ENCODE measurements at regions of chr4 and their contacts with region 1.

Region 1: DNA sequence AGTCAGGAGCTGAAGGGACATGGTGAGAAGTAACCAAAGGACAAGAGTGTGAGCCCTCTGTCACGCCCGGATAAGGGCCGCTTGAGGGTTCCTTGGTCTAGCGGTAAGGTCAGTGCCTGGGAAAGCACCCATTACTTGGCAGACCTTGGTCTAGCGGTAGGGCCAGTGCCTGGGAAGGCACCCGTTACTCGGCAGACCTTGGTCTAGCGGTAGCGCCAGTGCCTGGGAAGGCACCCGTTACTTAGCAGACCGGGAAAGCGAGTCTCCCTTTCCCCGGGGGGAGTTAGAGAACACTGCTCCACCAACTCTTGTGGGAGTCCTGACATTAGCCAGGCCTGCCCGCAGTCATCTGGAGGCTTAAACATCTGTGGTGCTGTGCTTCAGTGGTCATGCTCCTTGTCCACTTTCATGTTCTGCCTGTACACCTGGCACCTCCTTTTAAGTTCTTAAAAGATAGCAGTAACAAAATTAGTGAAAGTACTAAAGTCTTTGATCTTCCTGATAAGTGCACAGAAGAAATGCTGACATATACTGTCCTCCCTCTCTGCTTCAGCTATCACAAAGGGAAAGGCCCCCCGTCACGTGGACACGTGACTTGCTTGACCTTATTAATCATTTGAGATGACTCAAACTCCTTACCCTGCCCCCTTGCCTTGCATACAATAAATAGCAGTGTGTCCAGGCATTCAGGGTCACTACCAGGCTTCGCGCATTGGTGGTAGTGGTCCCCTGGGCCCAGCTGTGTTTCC is 9.3 kb upstream of the SEC24B start:
- DNase-seq: no peak
- ATAC-seq: no peak
- H3K4me3 ChIP-seq: no peak overlapping the region
- H3K27ac ChIP-seq: no peak overlapping the region
- H3K4me1 ChIP-seq: peaks cover 0 to 5% (median 0%) of the 10 kb centered on the region in 12 donors
- H3K27me3 ChIP-seq: no peaks in the 10 kb centered on the region
- CTCF ChIP-seq: no peak
- POLR2A ChIP-seq: no peak

Region 2: DNA sequence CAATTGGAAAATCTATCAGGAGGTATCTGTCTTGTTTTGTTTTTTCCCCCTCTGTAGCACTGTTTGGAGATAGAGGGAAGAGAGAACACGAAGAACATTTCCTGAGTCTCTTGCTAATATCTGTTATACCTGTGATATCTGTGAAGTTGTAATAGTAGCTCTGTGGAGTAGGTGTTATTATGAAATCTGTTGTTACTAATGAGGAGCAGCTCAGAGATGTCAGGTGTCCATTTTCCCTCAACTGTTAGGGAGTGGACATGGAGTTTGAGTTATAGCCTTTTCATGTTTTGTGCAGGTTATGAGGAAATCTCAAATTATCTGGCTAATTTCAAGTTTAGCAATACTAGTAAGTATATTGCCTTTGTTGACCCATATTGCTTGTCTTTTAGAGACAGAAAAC is 61.7 kb after region 1 on chr4:
- intact Hi-C with region 1: no loop called
- DNase-seq: no peak
- ATAC-seq: no peak
- H3K4me3 ChIP-seq: no peak overlapping the region
- H3K27ac ChIP-seq: no peak overlapping the region
- H3K4me1 ChIP-seq: peaks cover 0 to 4% (median 0%) of the 10 kb centered on the region in 12 donors
- H3K27me3 ChIP-seq: no peaks in the 10 kb centered on the region
- CTCF ChIP-seq: no peak
- POLR2A ChIP-seq: no peak

Region 3: DNA sequence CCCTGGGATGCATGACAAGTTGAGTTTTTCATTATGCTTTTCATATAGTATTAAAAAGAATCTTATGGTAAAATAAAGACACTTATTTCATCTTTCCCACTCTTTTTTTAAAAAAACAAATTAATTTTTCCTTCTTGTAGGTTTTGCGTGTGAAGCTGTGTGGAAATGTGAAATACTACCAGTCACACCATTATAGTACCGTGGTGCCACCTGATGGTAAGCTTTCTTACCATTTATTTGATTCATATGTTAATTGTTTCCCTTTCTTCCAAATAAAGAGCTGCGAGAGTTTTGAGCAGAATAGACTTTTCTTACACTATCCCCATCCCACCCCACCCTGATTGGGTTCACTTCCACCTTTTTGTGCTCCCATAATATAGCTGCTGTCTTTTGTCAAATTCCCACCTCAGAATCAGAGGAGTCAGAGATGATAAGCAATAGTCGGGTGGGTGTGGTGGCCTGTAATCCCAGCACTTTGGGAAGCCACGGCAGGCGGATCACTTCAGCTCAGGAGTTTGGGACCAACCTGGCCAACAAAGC is 234.7 kb after region 1 on chr4:
- intact Hi-C with region 1: loop called in 9 of 10 experiments (anchors 2 to 10 kb)
- DNase-seq: no peak
- ATAC-seq: no peak
- H3K4me3 ChIP-seq: no peak overlapping the region
- H3K27ac ChIP-seq: no peak overlapping the region
- H3K4me1 ChIP-seq: no peaks in the 10 kb centered on the region
- H3K27me3 ChIP-seq: no peaks in the 10 kb centered on the region
- CTCF ChIP-seq: peak in 6 of 12 donors; percentile 13 to 41 (median 29)
- POLR2A ChIP-seq: no peak

Region 4: DNA sequence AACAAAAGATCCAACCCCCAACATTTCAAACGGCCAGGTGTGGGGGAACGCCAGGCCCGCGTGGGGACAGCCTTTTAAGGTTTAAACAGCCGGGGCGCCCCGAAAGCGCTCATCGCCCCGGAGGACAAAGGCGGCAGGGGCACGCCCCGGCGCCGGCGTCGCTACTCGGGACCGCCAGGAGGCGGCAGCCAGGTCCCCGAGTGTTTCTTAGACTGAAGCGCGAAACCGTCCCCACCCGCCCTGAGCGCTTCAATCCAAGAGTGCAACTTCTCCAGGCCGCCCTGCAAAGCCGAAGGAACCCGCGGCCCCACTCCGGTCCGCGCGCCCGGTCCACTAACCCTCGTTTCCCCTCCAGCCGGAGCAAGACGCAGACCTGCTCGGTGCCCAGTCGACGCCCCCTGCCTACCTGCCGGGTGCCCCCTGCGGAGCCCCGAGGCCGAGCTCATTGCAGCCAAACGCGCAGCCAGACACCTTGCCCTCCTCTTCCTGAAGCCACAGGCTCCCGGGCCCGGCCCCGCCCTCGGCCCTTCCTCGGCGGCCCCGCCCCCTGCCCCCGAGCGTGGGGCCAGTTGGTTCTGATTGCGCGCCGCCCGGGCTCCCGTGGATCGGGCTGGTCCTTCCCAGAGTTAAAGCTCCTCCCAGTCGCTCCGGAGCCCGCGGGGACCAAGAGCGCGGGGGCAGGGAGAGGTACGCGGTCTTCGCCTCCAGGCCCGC is 278.8 kb after region 1 on chr4 and contains the start of gene CASP6:
- intact Hi-C with region 1: loop called in 1 of 10 experiments (anchors 10 kb)
- DNase-seq: peak; percentile 87 to 93 (median 87)
- ATAC-seq: peak; percentile 85 to 97 (median 96)
- H3K4me3 ChIP-seq: peak within 1 kb of the TSS; percentile 59 to 97 (median 76)
- H3K27ac ChIP-seq: peak within 1 kb of the TSS; percentile 40 to 90 (median 85)
- H3K4me1 ChIP-seq: peaks cover 0 to 21% (median 16%) of the 10 kb centered on the region in 12 donors
- H3K27me3 ChIP-seq: no peaks in the 10 kb centered on the region
- CTCF ChIP-seq: peak; percentile 53 to 82 (median 68)
- POLR2A ChIP-seq: peak in 1 of 2 donors; percentile 54
- total RNA-seq, gene CASP6: 3.5 to 16.4 (median 6.5) TPM

Region 5: DNA sequence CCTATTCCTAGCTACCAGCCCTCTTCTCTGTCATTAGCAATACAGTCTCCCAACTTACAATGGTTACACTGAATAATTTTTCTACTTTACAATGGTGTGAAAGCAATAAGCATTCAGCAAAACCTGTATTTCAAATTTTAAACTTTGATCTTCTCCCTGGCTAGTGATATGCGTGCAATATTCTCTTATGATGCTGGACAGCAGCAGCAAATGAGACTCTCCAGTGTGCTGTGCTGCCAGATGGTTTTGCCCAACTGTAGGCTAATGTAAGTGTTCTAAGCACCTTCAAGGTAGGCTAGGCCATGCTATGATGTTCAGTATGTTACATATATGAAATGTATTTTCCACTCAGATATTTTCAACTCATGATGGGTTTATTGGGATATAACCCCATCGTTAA is 385.4 kb after region 1 on chr4:
- intact Hi-C with region 1: loop called in 2 of 10 experiments (anchors 1 to 5 kb)
- DNase-seq: no peak
- ATAC-seq: no peak
- H3K4me3 ChIP-seq: no peak overlapping the region
- H3K27ac ChIP-seq: no peak overlapping the region
- H3K4me1 ChIP-seq: peaks cover 0 to 5% (median 3%) of the 10 kb centered on the region in 12 donors
- H3K27me3 ChIP-seq: no peaks in the 10 kb centered on the region
- CTCF ChIP-seq: no peak
- POLR2A ChIP-seq: no peak

Region 6: DNA sequence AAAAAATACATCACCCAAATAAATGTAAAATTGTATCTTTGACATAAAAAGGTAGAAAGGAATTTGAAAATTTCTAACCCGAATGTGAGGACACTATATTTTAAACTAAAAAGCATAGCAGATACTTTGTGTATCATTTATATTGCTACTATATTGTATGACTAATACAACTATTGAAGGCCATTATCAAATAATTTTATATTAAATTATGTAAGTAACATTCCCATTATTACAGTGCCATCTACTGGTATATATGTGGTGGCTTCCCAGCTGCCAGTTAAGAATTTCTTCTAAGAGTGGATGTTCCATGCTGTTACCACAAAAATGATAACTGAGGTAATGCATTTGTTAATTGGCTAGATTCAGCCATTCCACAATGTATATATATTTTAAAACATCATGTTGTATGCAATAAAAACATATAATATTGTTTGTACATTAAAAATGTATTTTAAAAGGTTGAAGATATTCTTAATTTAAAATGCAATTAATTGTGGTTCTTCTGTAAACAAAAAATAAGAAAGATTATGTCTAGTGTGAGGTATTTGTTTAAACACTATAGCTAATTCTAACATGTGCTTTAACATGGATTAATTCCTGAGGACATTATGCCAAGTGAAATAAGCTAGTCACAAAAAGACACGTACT is 553.7 kb after region 1 on chr4:
- intact Hi-C with region 1: loop called (anchors 2 to 5 kb)
- DNase-seq: no peak
- ATAC-seq: no peak
- H3K4me3 ChIP-seq: no peak overlapping the region
- H3K27ac ChIP-seq: no peak overlapping the region
- H3K4me1 ChIP-seq: peaks cover 0 to 12% (median 0%) of the 10 kb centered on the region in 12 donors
- H3K27me3 ChIP-seq: no peaks in the 10 kb centered on the region
- CTCF ChIP-seq: peak; percentile 45 to 79 (median 66)
- POLR2A ChIP-seq: no peak